PC-3 (cell line): ENCODE measurements at regions of chr9 and their contacts with region 1.

Region 1: GRCh38 chr9:111016426-111017045 is 21.7 kb downstream of the LPAR1 start:
- DNase-seq: peak; percentile 42
- ATAC-seq: no peak
- H3K4me3 ChIP-seq: 0 out of 2 replicates have a peak overlapping the region, but pooled peaks have one; percentile 2
- H3K27ac ChIP-seq: peak overlapping the region; percentile 82
- H3K4me1 ChIP-seq: peaks cover 59% of the 10 kb centered on the region
- H3K27me3 ChIP-seq: no peaks in the 10 kb centered on the region
- CTCF ChIP-seq: no peak

Region 2: GRCh38 chr9:110797611-110798010 is 218.9 kb before region 1 on chr9:
- CTCF ChIA-PET with region 1: no interaction called
- POLR2A ChIA-PET with region 1: no interaction called
- intact Hi-C with region 1: loop called (anchors 5 kb)
- DNase-seq: peak; percentile 91
- ATAC-seq: peak; percentile 67
- H3K4me3 ChIP-seq: no peak overlapping the region; the same call in 1 of the 2 replicates
- H3K27ac ChIP-seq: peak overlapping the region; percentile 99
- H3K4me1 ChIP-seq: peaks cover 43% of the 10 kb centered on the region
- H3K27me3 ChIP-seq: no peaks in the 10 kb centered on the region
- CTCF ChIP-seq: no peak

Region 3: GRCh38 chr9:110954822-110955291 is 61.7 kb before region 1 on chr9:
- CTCF ChIA-PET with region 1: no interaction called
- POLR2A ChIA-PET with region 1: no interaction called
- intact Hi-C with region 1: no loop called
- DNase-seq: no peak
- ATAC-seq: no peak
- H3K4me3 ChIP-seq: no peak overlapping the region
- H3K27ac ChIP-seq: no peak overlapping the region
- H3K4me1 ChIP-seq: peaks cover 38% of the 10 kb centered on the region
- H3K27me3 ChIP-seq: no peaks in the 10 kb centered on the region
- CTCF ChIP-seq: no peak

Region 4: DNA sequence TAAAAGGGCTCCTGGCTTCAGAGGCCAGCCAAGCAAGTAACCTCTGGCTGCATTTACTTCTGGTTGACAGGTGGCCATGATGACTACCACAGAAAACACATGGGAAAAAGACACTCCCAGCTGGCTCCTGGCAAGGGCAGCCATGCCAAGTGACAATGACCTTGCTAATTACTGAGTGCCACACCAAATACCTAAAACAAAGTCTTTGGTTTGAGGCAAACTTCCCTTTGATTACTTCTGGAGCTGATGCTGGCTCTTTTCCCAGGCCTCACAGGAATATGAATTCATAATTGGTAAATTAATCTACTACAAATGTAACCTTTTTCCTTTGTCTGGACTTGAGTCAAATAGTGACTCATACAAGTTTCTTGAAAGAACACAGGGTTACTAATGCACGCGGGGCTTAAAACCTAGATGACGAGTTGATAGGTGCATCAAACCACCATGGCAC is 39.3 kb before region 1 on chr9:
- CTCF ChIA-PET with region 1: no interaction called
- POLR2A ChIA-PET with region 1: no interaction called
- intact Hi-C with region 1: loop called (anchors 5 kb)
- DNase-seq: peak; percentile 87
- ATAC-seq: peak; percentile 70
- H3K4me3 ChIP-seq: no peak overlapping the region
- H3K27ac ChIP-seq: peak overlapping the region; percentile 89
- H3K4me1 ChIP-seq: peaks cover 31% of the 10 kb centered on the region
- H3K27me3 ChIP-seq: no peaks in the 10 kb centered on the region
- CTCF ChIP-seq: no peak